ENCODE measurements at regions of chr17 and their contacts with region 1.

Region 1: DNA sequence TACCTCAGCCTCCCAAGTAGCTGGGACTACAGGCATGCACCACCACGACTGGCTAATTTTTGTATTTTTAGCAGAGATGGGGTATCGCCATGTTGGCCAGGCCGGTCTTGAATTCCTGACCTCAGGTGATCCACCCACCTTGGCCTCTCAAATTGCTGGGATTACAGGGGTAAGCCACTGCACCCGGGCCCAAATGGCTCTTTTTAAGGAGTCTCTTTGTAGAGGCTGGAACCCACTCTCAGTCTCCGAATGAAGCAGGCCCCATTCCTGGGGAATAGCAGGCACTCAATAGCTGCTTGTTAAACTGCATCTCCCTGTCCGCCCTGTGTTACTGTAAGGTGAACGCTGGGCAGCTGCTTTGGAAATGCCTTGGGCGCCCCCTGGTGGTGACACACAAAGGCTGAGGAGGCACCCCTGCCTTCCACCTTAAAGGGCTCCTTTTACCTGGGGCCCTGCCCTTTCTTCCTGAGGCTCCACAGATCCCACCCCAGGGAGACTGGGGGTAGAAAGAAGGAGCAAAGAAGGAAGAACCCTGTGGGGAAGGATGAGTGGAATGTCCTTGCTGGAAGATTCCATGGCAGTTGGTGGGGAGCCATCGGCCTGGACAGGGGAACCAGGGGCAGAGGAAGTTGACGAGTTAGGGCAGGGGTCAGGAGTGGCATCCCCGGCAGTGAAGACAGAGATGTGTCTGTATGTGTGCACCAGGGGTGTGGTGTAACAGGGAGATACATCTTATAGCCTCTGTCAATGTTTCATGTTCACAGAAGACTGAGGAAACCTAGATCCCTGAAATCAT is 6.1 kb upstream of the SP2 start:
- DNase-seq: peak; percentile 49
- H3K4me3 ChIP-seq: no peak overlapping the region
- H3K27ac ChIP-seq: no peak overlapping the region
- H3K4me1 ChIP-seq: peaks cover 10 to 44% (median 14%) of the 10 kb centered on the region in 3 donors
- H3K27me3 ChIP-seq: no peaks in the 10 kb centered on the region
- CTCF ChIP-seq: peak; percentile 85 to 99 (median 98)
- POLR2A ChIP-seq: no peak

Region 2: GRCh38 chr17:47789611-47790561 is 100.0 kb before region 1 on chr17:
- intact Hi-C with region 1: no loop called
- DNase-seq: no peak
- H3K4me3 ChIP-seq: peak overlapping the region; percentile 14 to 65 (median 44)
- H3K27ac ChIP-seq: no peak overlapping the region
- H3K4me1 ChIP-seq: peaks cover 8 to 12% (median 9%) of the 10 kb centered on the region in 3 donors
- H3K27me3 ChIP-seq: peaks cover 0 to 93% (median 18%) of the 10 kb centered on the region in 4 donors
- CTCF ChIP-seq: peak in 5 of 6 experiments; percentile 19 to 57 (median 34)
- POLR2A ChIP-seq: no peak

Region 3: DNA sequence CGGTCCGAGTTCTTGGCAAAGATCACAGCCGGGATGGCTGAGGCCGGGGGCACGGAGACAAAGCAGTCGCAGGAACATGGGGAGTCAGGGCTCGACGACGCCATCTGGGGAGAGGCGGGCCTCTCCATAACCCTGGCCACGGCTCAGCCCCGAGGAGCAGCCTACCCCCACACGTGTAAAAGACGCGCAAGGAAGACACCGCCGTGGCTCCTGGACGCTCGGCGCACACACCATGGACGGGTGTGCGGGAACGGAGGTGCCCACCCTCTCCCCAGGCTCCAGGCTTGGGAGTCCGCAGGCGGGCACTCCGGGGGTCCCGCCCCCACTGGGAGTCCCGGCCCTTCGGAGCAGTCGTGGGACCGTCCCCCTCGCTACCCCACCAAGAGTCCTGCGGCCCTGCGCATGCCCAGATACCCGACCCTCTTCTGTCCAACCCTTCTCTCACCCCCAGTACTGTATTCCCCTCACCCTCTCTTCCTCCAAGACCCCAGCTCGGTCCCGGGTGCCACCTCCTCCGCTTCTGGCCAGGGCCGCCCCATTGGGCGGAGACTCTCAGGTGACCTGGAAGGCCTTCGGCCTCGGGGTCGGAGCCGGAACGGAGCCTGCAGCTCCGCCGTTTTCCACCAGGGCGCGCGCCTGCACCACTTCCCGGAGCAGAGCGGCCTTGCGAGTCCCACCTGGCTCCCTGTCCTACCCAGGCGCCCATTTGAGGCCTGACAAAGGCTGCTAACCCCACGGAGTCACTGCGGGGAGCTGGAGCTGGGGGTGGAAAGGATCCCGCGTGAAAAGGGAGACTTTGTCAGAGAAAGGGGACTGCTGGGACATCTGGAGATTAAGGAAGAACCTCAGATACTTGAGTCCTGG is 49.0 kb before region 1 on chr17 and contains the start of gene SCRN2:
- intact Hi-C with region 1: loop called (anchors 2 kb)
- DNase-seq: peak; percentile 16
- H3K4me3 ChIP-seq: peak within 1 kb of the TSS; percentile 79 to 92 (median 90)
- H3K27ac ChIP-seq: peak within 1 kb of the TSS; percentile 47 to 86 (median 82)
- H3K4me1 ChIP-seq: peaks cover 19 to 56% (median 24%) of the 10 kb centered on the region in 3 donors
- H3K27me3 ChIP-seq: peaks cover 0 to 17% (median 0%) of the 10 kb centered on the region in 4 donors
- CTCF ChIP-seq: peak; percentile 95 to 99 (median 98)
- POLR2A ChIP-seq: no peak
- total RNA-seq, gene SCRN2: 13.9 to 24.8 (median 17.8) TPM

Region 4: GRCh38 chr17:48002266-48002915 is 112.5 kb after region 1 on chr17:
- intact Hi-C with region 1: no loop called
- DNase-seq: no peak
- H3K4me3 ChIP-seq: no peak overlapping the region
- H3K27ac ChIP-seq: peak overlapping the region; percentile 4 to 67 (median 52)
- H3K4me1 ChIP-seq: peaks cover 17 to 30% (median 22%) of the 10 kb centered on the region in 3 donors
- H3K27me3 ChIP-seq: peaks cover 0 to 69% (median 0%) of the 10 kb centered on the region in 4 donors
- CTCF ChIP-seq: no peak
- POLR2A ChIP-seq: no peak

Region 5: DNA sequence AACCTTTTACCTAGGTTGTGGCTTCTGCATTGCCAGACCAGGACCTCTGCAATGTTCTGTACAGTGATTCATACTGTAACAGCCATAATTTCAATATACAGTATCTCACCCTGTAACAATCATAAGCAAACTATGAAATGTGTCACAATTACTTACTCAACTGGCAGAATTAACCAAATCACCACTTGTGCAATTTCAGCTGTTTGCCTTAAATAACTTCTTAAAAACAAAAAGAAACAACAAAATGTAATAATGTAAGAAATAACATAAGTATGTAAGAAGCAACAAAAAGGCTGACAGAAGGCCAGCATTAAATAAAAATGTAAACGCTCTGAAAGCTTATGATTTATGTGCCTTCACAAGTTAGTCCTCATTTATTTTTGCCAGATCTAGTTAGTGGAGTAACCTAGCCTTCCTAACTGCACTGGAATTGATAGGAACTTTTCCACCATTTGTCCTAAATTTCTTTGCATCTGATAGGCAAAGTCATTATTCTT is 443.1 kb after region 1 on chr17:
- intact Hi-C with region 1: no loop called
- DNase-seq: no peak
- H3K4me3 ChIP-seq: no peak overlapping the region
- H3K27ac ChIP-seq: no peak overlapping the region
- H3K4me1 ChIP-seq: no peaks in the 10 kb centered on the region
- H3K27me3 ChIP-seq: peaks cover 0 to 100% (median 5%) of the 10 kb centered on the region in 4 donors
- CTCF ChIP-seq: no peak
- POLR2A ChIP-seq: no peak